ENCODE measurements at regions of chr21 and their contacts with region 1.

Region 1: DNA sequence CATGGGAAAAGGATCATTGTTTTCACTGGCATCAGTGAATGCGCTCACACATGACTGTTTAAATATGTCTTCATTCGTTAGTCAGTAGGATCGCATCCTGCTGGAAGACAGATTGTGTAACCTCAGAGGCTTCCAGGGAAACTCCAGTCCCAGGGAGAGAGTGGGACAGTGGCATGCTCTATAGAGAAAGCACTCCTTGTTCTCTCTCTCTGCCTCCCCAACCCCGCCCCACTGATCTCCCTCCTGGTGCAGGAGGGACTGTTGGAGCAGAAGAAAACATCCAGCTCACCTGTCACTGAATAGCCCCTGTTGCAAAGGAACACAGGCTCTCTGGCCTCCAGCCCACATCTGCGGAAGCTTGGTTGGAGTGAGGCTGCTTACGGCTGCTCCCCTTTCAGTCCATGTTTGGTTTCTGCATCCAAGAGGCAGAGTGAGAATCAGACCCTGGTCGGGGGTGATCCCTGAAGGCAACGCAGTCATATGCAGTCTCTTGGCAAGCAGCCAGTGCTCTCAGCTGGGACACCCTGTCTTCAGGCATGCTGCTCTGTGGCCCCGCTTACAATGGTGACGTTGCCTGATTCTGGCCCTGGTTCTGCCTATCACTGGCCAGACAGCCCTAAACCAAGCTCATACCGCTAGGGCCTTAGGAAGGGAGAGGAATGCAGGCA is 39.6 kb downstream of the BACE2 start:
- DNase-seq: peak; percentile 89
- H3K4me3 ChIP-seq: peak overlapping the region in 3 of 4 donors; percentile 6 to 26 (median 14)
- H3K27ac ChIP-seq: peak overlapping the region; percentile 55 to 71 (median 65)
- H3K4me1 ChIP-seq: peaks cover 0 to 21% (median 18%) of the 10 kb centered on the region in 4 donors
- H3K27me3 ChIP-seq: no peaks in the 10 kb centered on the region
- CTCF ChIP-seq: no peak
- EP300 ChIP-seq: no peak
- POLR2A ChIP-seq: no peak

Region 2: GRCh38 chr21:41032541-41032940 is 175.0 kb before region 1 on chr21:
- intact Hi-C with region 1: no loop called
- DNase-seq: no peak
- H3K4me3 ChIP-seq: no peak overlapping the region
- H3K27ac ChIP-seq: no peak overlapping the region
- H3K4me1 ChIP-seq: no peaks in the 10 kb centered on the region
- H3K27me3 ChIP-seq: no peaks in the 10 kb centered on the region
- CTCF ChIP-seq: no peak
- EP300 ChIP-seq: no peak
- POLR2A ChIP-seq: no peak

Region 3: DNA sequence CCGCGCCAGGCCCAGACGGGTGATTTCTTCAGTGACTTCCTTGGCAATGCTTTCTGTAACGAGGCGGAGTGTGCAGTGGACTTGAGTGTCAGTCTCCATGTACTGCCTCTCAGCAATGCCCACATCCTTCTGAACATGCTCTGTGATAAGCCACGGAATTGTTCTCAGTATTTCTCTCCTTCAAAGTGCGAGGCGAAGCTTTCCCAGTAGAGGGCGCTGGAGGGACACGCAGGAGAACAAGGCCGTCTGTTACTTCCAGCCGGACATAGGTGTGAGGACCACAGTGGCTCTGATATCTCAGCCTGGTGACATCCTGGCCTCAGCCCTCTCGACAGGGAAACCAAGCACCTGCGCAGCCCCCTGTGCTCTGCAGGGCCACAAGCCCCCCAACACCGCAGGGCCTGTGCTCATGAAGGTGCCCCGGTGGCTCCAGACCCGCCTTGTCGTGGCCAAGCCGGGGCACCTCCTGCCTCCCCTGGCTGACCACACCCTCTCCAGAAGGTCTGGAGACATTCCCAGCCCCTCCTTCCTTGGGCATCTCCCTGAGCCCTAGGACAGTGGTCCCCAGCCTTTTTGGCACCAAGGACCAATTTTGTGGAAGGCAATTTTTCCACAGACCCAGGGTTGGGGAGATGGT is 85.6 kb before region 1 on chr21:
- intact Hi-C with region 1: loop called (anchors 5 kb)
- DNase-seq: peak; percentile 88
- H3K4me3 ChIP-seq: no peak overlapping the region
- H3K27ac ChIP-seq: no peak overlapping the region
- H3K4me1 ChIP-seq: peaks cover 0 to 13% (median 7%) of the 10 kb centered on the region in 4 donors
- H3K27me3 ChIP-seq: peaks cover 0 to 10% (median 0%) of the 10 kb centered on the region in 3 donors
- CTCF ChIP-seq: peak; percentile 67 to 85 (median 76)
- EP300 ChIP-seq: no peak
- POLR2A ChIP-seq: no peak

Measured in sigmoid colon (tissue), 7 donors.